Mammary epithelial cell (primary cell): ENCODE measurements at regions of chr19 and their contacts with region 1.

Region 1: GRCh38 chr19:16714702-16715287 is 4.9 kb upstream of the NWD1 start:
- DNase-seq: peak; percentile 44
- H3K4me3 ChIP-seq: no peak overlapping the region
- H3K27ac ChIP-seq: no peak overlapping the region
- H3K4me1 ChIP-seq: peaks cover 17% of the 10 kb centered on the region
- H3K27me3 ChIP-seq: no peaks in the 10 kb centered on the region
- CTCF ChIP-seq: peak; percentile 84 to 96

Region 2: GRCh38 chr19:16572332-16573211 is 142.2 kb before region 1 on chr19 and contains the start of gene SLC35E1:
- CTCF ChIA-PET with region 1: no interaction called
- dilution Hi-C with region 1: no loop called
- in situ Hi-C with region 1: no loop called
- intact Hi-C with region 1: loop called (anchors 1 kb)
- DNase-seq: peak; percentile 96
- H3K4me3 ChIP-seq: peak within 1 kb of the TSS; percentile 86 to 92 (median 91)
- H3K27ac ChIP-seq: peak within 1 kb of the TSS; percentile 91
- H3K4me1 ChIP-seq: peaks cover 31% of the 10 kb centered on the region
- H3K27me3 ChIP-seq: no peaks in the 10 kb centered on the region
- CTCF ChIP-seq: no peak
- total RNA-seq, gene SLC35E1: 50.8 to 67.2 TPM

Region 3: DNA sequence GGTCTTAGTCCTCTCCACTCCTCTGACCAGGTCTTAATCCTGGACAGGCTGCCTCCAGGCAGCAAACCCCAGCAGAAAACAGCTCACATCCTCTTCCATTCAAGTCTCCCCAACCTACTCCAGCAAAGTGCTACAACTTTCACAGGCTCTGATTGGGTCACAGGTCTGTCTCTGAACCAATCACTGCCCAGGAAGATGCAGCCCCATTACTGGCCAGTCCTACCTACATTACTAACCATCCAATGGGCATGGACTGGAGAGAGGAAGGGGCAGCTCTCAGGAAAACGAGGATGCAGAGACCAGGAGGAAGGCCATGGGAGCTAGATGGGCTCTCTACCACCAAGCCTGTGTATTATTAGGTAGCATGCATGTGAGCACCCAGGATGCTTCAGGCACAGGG is 99.0 kb before region 1 on chr19:
- CTCF ChIA-PET with region 1: no interaction called
- dilution Hi-C with region 1: no loop called
- in situ Hi-C with region 1: no loop called
- intact Hi-C with region 1: no loop called
- DNase-seq: no peak
- H3K4me3 ChIP-seq: no peak overlapping the region
- H3K27ac ChIP-seq: no peak overlapping the region
- H3K4me1 ChIP-seq: peaks cover 20% of the 10 kb centered on the region
- H3K27me3 ChIP-seq: no peaks in the 10 kb centered on the region
- CTCF ChIP-seq: no peak

Region 4: DNA sequence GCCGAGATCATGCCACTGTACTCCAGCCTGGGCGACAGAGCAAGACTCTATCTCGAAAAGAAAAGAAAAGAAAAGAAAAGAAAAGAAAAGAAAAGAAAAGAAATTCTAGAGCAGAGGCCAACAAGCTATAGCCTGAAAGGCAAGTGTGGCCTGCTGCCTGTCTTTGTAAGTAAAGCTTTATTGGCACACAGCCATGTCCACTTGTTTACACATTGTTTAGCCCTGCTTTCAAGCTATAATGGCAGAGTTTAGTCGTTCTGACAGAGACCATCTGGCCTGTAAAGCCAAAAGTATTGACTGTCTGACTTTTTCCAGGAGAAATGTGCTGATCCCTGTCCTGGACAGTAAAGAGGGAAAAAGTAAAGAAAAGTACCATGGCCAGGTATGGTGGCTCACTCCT is 23.1 kb after region 1 on chr19:
- CTCF ChIA-PET with region 1: interaction called, 3 read pairs
- dilution Hi-C with region 1: no loop called
- in situ Hi-C with region 1: no loop called
- intact Hi-C with region 1: loop called (anchors 1 kb)
- DNase-seq: no peak
- H3K4me3 ChIP-seq: no peak overlapping the region
- H3K27ac ChIP-seq: no peak overlapping the region
- H3K4me1 ChIP-seq: peaks cover 5% of the 10 kb centered on the region
- H3K27me3 ChIP-seq: no peaks in the 10 kb centered on the region
- CTCF ChIP-seq: no peak

Region 5: GRCh38 chr19:16751733-16752132 is 36.9 kb after region 1 on chr19:
- CTCF ChIA-PET with region 1: no interaction called
- dilution Hi-C with region 1: no loop called
- in situ Hi-C with region 1: no loop called
- intact Hi-C with region 1: no loop called
- DNase-seq: no peak
- H3K4me3 ChIP-seq: no peak overlapping the region
- H3K27ac ChIP-seq: no peak overlapping the region
- H3K4me1 ChIP-seq: no peaks in the 10 kb centered on the region
- H3K27me3 ChIP-seq: no peaks in the 10 kb centered on the region
- CTCF ChIP-seq: no peak

Region 6: GRCh38 chr19:16771618-16772017 is 56.8 kb after region 1 on chr19:
- CTCF ChIA-PET with region 1: no interaction called
- dilution Hi-C with region 1: no loop called
- in situ Hi-C with region 1: loop called in 1 of 2 experiments (anchors 10 kb)
- intact Hi-C with region 1: loop called (anchors 1 kb)
- DNase-seq: peak; percentile 55
- H3K4me3 ChIP-seq: no peak overlapping the region
- H3K27ac ChIP-seq: no peak overlapping the region
- H3K4me1 ChIP-seq: peaks cover 3% of the 10 kb centered on the region
- H3K27me3 ChIP-seq: no peaks in the 10 kb centered on the region
- CTCF ChIP-seq: peak; percentile 81 to 86

Region 7: DNA sequence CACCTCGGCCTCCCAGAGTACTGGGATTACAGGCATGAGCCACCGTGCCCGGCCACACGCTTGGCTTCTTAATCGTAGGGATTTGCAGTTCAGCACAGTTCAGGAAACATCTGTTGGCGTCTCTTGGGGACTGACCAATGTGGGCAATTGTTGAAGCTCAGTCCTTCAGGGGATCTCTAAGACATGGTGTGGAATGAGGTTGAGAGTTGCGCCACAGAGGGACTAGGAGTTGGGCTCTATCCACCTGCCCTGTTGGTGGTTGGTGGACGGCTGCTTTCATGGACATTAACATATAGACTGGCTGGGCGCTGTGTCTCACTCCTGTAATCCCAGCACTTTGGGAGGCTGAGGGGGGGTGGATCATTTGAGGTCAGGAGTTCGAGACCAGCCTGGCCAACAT is 77.2 kb after region 1 on chr19:
- CTCF ChIA-PET with region 1: no interaction called
- dilution Hi-C with region 1: loop called (anchors 5 kb)
- in situ Hi-C with region 1: no loop called
- intact Hi-C with region 1: no loop called
- DNase-seq: no peak
- H3K4me3 ChIP-seq: no peak overlapping the region
- H3K27ac ChIP-seq: no peak overlapping the region
- H3K4me1 ChIP-seq: no peaks in the 10 kb centered on the region
- H3K27me3 ChIP-seq: no peaks in the 10 kb centered on the region
- CTCF ChIP-seq: no peak

Region 8: DNA sequence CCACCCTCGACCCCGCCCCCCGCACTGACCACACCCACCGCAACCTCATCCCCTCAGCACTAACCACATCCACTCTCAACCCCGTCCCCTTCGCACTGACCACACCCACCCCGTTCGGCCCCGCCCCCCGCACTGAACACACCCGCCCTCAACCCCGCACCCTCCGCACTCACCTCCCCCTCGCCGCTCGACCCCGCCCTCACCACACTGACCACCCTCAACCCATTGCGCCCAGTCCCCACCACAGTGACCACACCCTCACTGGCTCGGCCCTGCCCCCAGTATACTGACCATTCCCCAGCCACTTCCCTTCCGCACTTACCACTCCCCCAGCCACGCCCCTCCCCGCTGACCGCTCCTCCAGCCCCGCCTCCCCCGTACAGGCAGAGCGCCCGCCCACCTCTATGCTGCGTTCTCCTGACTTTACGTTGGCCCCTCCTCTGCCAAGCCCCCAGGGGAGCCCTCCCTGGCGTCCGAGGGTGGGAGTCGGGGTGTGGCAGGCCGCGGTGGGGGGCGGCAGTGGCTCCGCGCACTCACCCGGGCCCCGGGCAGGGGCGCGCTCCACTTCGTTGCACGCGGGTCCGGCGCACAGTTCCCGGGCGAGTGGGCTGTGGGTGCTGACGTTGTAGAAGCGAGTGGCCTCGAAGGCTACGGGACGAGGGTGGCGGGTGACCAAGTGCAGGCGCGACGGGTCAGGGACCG is 182.5 kb after region 1 on chr19:
- CTCF ChIA-PET with region 1: no interaction called
- dilution Hi-C with region 1: no loop called
- in situ Hi-C with region 1: no loop called
- intact Hi-C with region 1: loop called (anchors 1 kb)
- DNase-seq: peak; percentile 86
- H3K4me3 ChIP-seq: peak overlapping the region; percentile 62 to 88 (median 67)
- H3K27ac ChIP-seq: no peak overlapping the region
- H3K4me1 ChIP-seq: peaks cover 13% of the 10 kb centered on the region
- H3K27me3 ChIP-seq: no peaks in the 10 kb centered on the region
- CTCF ChIP-seq: no peak

Region 9: DNA sequence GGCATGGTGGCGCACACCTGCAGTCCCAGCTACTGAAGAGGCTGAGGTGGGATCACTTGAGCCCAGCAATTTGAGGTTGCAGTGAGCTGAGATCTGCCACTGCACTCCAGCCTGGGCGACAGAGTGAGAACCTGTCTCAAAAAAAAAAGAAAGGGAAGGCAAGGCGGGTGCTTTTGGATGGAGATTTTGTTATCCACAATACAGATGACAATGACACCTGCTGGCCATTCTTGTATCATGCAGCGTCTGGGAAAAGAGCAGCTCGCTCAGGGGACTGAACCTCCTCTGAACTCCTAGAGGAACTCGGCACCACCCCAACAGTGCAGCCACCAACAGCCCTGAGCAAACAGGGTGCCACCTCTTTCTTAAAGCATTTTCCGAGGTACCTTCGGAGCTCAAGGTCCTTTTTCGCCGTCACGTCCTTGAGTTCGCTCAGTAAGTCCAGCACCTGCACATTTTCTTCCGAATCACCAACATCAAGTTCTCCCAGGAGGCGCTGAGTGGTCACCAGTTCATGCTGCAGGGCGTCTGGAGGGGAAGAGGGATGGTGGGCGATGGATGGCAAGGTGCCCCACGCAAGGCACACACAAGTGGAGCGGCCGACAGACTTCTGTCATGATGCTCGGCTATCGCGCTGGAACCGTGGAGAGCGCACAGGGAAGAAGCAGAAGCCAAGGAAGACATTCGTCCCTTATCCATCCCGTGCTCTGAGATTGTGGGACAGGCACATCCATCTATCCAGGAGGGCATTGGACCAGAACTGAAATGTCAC is 337.8 kb after region 1 on chr19:
- CTCF ChIA-PET with region 1: no interaction called
- dilution Hi-C with region 1: no loop called
- in situ Hi-C with region 1: no loop called
- intact Hi-C with region 1: loop called (anchors 1 kb)
- DNase-seq: peak; percentile 34
- H3K4me3 ChIP-seq: no peak overlapping the region
- H3K27ac ChIP-seq: no peak overlapping the region
- H3K4me1 ChIP-seq: no peaks in the 10 kb centered on the region
- H3K27me3 ChIP-seq: no peaks in the 10 kb centered on the region
- CTCF ChIP-seq: peak; percentile 49 to 71